Activated T-helper 1 cell treated with anti-CD3 and anti-CD28 coated beads, Interleukin-12 subunit alpha, Interleukin-12 subunit beta, Interleukin-2, Interleukin-4 antibody, amounts not matched to agents 30 ng/mL and 10 ng/mL and 1 ng/mL, durations not matched to agents 14 hours and 24 hours and 36 hours (primary cell): ENCODE measurements at regions of chr14 and their contacts with region 1.

Region 1: DNA sequence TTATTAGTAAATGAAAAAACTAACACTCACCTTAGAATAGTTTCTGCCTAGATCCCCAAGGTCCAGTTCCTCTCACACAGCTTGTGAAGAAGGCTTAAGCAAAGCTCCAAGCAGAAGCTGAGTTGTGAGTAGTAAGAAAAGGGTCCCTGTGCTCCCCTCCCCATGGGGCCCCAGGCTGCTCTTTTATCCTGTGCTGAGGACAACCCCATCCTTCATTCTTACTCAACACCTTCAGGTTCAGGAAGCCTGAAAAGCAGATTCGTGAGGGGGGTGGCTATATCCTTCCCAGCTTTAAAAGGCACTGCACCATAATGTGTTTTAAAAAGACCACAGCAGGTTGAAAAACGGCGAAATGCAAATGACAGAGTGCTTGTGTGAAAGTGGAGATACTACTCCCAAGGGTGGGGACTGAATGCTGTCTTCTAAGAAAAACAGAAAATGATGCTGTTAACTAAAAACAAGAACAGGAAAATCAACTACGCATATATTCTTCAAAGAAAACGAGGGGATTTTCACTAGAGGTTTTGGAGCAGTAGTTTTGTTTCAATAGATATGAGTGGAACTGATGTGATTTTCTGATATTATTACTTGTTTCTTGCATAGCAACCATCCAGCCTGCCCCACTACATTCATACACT is 182.7 kb downstream of the KTN1 start:
- DNase-seq: peak; percentile 20
- H3K4me3 Mint-ChIP-seq: peak overlapping the region; percentile 62
- H3K27ac Mint-ChIP-seq: peak overlapping the region; percentile 54
- H3K4me1 Mint-ChIP-seq: peaks cover 58% of the 10 kb centered on the region
- H3K27me3 Mint-ChIP-seq: peaks cover 10% of the 10 kb centered on the region

Region 2: DNA sequence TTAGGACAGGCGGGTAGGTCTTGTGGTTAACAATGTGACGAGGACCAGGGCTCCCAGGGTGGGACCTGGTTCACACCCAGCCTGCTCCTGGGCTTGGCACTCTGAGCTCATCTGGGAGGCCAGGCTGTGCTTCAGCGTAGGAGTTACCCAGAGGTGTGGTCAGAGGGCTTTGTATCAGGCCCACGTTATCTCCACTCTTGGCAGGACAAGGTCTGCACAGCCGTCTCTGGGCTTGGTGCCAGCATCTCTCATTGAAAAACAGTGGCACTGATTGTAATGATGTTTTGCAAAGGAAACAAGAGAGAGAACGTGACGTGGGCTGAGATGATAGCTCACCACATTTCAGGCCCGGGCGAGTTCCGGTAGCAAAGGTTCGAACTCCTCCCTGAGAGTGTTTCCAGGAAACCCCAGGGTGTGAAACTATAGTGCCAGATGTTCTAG is 44.4 kb after region 1 on chr14:
- intact Hi-C with region 1: loop called (anchors 1 kb)
- DNase-seq: peak; percentile 70
- H3K4me3 Mint-ChIP-seq: peak overlapping the region; percentile 45
- H3K27ac Mint-ChIP-seq: peak overlapping the region; percentile 85
- H3K4me1 Mint-ChIP-seq: peaks cover 60% of the 10 kb centered on the region
- H3K27me3 Mint-ChIP-seq: no peaks in the 10 kb centered on the region